H1 (cell line): ENCODE measurements at regions of chr16 and their contacts with region 1.

Region 1: GRCh38 chr16:17467923-17468540 is 2.7 kb downstream of the XYLT1 start:
- DNase-seq: peak in 1 of 2 experiments; percentile 72
- H3K4me3 ChIP-seq: peak overlapping the region in 1 of 4 experiments; percentile 36; a peak in 1 of 8 replicates
- H3K27ac ChIP-seq: no peak overlapping the region
- H3K4me1 ChIP-seq: peaks cover 13 to 35% (median 21%) of the 10 kb centered on the region in 4 experiments; a peak in 6 of 7 replicates
- H3K27me3 ChIP-seq: peaks cover 0 to 28% (median 15%) of the 10 kb centered on the region in 4 experiments; a peak in 5 of 7 replicates
- CTCF ChIP-seq: peak; percentile 80 to 90 (median 83)
- EP300 ChIP-seq: no peak
- POLR2A ChIP-seq: no peak
- RAD21 ChIP-seq: peak; percentile 90 to 97

Region 2: DNA sequence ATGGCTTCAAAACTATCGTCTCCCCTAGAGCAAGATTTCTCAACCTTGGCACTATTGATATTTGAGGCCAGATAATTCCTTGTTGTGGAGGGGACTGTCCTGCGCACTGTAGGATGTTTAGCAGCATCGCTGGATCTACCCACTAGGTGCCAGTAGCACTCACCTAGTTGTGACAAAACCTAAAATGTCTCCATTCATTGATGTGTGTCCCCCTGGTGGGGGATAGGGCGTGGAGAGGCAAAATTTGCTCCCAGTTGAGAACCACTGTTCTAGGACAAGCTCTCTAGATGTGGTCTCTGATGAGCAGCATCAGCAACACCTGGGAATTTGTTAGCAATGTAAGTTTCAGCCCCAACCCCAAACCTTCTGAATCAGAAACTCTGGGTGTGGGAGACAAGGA is 256.2 kb before region 1 on chr16:
- CTCF ChIA-PET with region 1: interaction called, 27 read pairs
- POLR2A ChIA-PET with region 1: no interaction called
- DNase-seq: peak in 1 of 2 experiments; percentile 67
- H3K4me3 ChIP-seq: no peak overlapping the region
- H3K27ac ChIP-seq: no peak overlapping the region
- H3K4me1 ChIP-seq: peaks cover 0 to 10% (median 6%) of the 10 kb centered on the region in 4 experiments; a peak in 4 of 7 replicates
- H3K27me3 ChIP-seq: no peaks in the 10 kb centered on the region
- CTCF ChIP-seq: peak; percentile 69 to 99 (median 95)
- EP300 ChIP-seq: no peak
- POLR2A ChIP-seq: no peak
- RAD21 ChIP-seq: peak; percentile 82 to 84

Region 3: GRCh38 chr16:17269439-17269838 is 198.6 kb before region 1 on chr16:
- CTCF ChIA-PET with region 1: interaction called, 12 read pairs
- POLR2A ChIA-PET with region 1: no interaction called
- DNase-seq: no peak
- H3K4me3 ChIP-seq: no peak overlapping the region
- H3K27ac ChIP-seq: no peak overlapping the region
- H3K4me1 ChIP-seq: peaks cover 2 to 9% (median 4%) of the 10 kb centered on the region in 4 experiments; a peak in 5 of 7 replicates
- H3K27me3 ChIP-seq: no peaks in the 10 kb centered on the region
- CTCF ChIP-seq: no peak
- EP300 ChIP-seq: no peak
- POLR2A ChIP-seq: no peak
- RAD21 ChIP-seq: no peak

Region 4: GRCh38 chr16:17369421-17370222 is 98.4 kb before region 1 on chr16:
- CTCF ChIA-PET with region 1: interaction called, 15 read pairs
- POLR2A ChIA-PET with region 1: interaction called, 3 read pairs
- DNase-seq: no peak
- H3K4me3 ChIP-seq: no peak overlapping the region
- H3K27ac ChIP-seq: no peak overlapping the region
- H3K4me1 ChIP-seq: peaks cover 0 to 31% (median 24%) of the 10 kb centered on the region in 4 experiments; a peak in 6 of 7 replicates
- H3K27me3 ChIP-seq: no peaks in the 10 kb centered on the region
- CTCF ChIP-seq: no peak
- EP300 ChIP-seq: no peak
- POLR2A ChIP-seq: no peak
- RAD21 ChIP-seq: no peak

Region 5: DNA sequence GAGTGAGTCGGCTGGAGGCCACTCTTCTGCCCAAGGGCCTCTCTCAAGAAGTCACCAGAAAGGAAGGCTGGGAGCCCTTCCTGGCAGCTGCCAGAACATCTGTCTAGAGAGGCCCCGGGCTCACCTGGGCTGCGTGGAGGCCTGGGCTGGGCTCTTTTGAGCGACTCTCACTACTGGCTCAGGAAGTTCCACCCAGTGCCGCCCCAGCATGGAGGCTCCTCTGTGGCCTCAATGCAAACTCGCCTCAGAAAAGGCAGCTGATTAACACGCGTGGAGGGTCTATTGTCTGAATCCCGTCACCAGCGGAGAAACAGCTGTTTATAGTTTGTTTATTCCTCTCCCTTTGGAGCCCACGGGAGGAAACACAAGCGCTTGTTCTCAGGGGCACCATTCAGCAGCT is 22.6 kb before region 1 on chr16:
- CTCF ChIA-PET with region 1: interaction called, 10 read pairs
- POLR2A ChIA-PET with region 1: interaction called, 3 read pairs
- DNase-seq: no peak
- H3K4me3 ChIP-seq: no peak overlapping the region
- H3K27ac ChIP-seq: no peak overlapping the region
- H3K4me1 ChIP-seq: peaks cover 0 to 7% (median 3%) of the 10 kb centered on the region in 4 experiments; a peak in 2 of 7 replicates
- H3K27me3 ChIP-seq: no peaks in the 10 kb centered on the region
- CTCF ChIP-seq: no peak
- EP300 ChIP-seq: no peak
- POLR2A ChIP-seq: no peak
- RAD21 ChIP-seq: no peak

Region 6: GRCh38 chr16:17491140-17491662 is 23.2 kb after region 1 on chr16:
- CTCF ChIA-PET with region 1: no interaction called
- POLR2A ChIA-PET with region 1: no interaction called
- DNase-seq: no peak
- H3K4me3 ChIP-seq: no peak overlapping the region
- H3K27ac ChIP-seq: no peak overlapping the region
- H3K4me1 ChIP-seq: no peaks in the 10 kb centered on the region
- H3K27me3 ChIP-seq: no peaks in the 10 kb centered on the region
- CTCF ChIP-seq: no peak
- EP300 ChIP-seq: no peak
- POLR2A ChIP-seq: no peak
- RAD21 ChIP-seq: no peak

Region 7: GRCh38 chr16:17538927-17539326 is 70.9 kb after region 1 on chr16:
- CTCF ChIA-PET with region 1: no interaction called
- POLR2A ChIA-PET with region 1: no interaction called
- DNase-seq: no peak
- H3K4me3 ChIP-seq: no peak overlapping the region
- H3K27ac ChIP-seq: no peak overlapping the region
- H3K4me1 ChIP-seq: no peaks in the 10 kb centered on the region
- H3K27me3 ChIP-seq: no peaks in the 10 kb centered on the region
- CTCF ChIP-seq: no peak
- EP300 ChIP-seq: no peak
- POLR2A ChIP-seq: no peak
- RAD21 ChIP-seq: no peak